Left cardiac atrium (tissue), 4 donors: ENCODE measurements at regions of chr19 and their contacts with region 1.

Region 1: GRCh38 chr19:10403137-10404021 is at the start of gene CDC37:
- DNase-seq: peak; percentile 97
- ATAC-seq: peak; percentile 96 to 97
- total RNA-seq, gene CDC37: 130 to 156 TPM

Region 2: DNA sequence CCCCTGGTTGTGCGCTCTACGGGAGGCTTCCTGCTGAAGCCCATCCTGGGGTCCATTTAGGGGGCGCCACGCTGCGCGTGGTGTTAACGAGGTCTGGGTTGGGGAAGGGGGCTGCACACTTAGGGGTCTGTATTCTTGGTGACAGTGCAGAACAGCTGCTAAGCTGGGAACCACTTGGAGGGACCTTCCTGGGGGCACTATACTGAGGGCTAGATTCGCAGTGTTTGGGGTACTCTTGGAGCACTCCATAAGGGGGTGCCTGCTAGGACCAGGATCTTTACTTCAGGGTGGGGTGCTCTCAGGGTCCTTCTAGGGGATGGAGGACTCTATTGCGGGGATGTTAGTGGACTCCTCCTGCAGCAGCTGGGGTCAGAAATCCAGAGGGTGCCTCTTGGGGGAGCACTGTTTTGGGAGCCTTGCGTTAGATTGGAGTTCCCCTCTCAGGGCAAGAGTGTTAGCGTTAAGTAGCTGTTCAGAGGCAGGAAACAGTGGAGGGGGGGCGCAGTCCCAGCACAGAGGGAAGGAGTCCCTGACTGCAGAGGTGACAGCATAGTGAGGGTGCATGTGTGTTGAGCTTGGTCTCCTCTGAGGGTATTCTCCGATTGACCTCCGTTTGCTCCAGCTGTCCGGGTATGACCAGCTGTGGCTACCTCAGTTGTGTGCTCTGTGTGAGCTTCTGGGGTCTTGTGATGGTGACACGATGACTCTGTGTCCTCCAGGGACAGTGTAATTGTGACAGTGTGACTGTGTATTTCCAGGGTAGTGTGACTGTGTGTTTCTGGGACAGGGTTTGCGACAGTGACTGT is 18.1 kb after region 1 on chr19:
- intact Hi-C with region 1: loop called in 1 of 2 experiments (anchors 2 kb)
- DNase-seq: no peak
- ATAC-seq: no peak

Region 3: DNA sequence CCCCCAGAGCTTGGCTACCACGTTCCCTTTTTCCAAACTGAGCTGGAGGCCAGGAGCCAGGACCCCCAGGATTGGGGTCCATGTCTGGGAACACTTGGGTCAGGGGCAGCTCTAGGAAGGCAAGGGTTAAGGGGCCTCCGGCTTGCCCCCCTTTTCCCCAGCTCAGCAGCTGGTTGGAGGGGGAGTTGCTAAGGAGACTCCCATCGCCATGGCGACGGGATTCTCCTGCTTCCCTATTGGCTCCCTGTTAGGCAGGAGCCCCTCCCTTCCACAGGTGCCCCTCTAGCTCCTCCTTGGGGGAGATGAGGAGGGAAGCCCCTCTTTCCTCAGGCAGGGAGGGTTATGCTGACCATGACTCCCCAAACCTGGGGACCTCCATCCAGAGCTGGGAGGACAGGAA is 50.9 kb after region 1 on chr19:
- intact Hi-C with region 1: no loop called
- DNase-seq: no peak
- ATAC-seq: no peak